ENCODE measurements at regions of chr2 and their contacts with region 1.

Region 1: GRCh38 chr2:205680067-205680466 is 2.2 kb upstream of the NRP2 start:
- DNase-seq: peak in 4 of 10 donors; percentile 33 to 77 (median 40)

Region 2: DNA sequence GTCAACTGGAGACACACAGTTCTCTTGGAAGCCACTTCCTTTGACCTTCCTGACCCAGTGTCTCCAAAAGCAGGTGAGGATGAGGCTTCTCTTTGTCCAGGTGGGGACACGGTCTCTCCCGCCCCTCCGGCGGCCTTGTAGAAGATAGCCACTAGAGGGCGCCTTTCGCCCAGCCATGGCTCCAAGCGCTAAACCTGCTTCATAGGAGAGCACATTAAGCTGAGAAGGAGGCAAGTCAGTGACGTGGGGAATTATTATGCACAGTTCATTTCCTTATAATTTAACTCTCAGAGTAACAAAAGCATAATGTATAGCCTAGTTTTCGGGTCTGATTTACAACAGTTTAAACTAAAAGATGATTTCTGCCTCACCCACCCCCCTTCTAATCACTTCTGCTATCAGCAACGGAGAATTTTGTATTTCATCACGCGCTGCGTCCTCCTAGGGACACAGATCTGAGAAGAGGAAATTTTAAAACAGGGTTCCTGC is 1534.8 kb before region 1 on chr2:
- intact Hi-C with region 1: loop called (anchors 10 kb)
- DNase-seq: peak; percentile 43 to 96 (median 76)

Region 3: DNA sequence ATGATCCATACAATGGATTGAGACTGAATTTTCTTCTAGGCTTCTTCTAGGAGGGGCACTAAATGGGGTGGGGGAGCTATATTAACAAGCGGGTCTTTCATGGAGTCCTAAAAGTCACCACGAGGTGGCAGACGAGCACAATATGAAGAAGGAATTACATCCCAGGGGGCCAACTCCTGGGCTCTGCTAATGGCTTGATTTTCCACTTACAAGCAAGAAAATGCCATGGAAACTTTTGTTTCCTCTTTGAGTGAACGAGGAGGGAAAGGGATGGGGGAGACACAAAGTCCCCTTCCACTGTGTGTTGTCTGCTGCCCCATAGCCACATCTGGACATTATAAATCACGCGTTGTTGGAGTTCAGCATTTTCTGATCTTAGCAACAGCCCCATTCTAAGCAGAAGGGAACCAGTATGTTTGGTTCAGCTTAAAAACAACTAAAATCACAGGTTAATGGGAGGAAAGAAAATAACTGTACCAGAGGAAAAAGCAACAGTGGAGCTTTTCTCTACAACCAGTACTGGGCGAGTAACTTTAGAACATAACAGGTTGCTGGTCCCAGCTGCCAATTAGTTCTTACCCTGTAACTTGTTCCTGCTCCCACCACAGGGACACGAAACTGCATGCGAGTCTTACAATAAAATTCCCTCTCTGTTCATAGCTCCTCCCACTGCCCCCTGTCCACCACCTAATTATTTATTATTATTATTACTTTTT is 1419.7 kb before region 1 on chr2:
- intact Hi-C with region 1: loop called (anchors 2 kb)
- DNase-seq: peak in 7 of 10 donors; percentile 22 to 88 (median 68)

Region 4: DNA sequence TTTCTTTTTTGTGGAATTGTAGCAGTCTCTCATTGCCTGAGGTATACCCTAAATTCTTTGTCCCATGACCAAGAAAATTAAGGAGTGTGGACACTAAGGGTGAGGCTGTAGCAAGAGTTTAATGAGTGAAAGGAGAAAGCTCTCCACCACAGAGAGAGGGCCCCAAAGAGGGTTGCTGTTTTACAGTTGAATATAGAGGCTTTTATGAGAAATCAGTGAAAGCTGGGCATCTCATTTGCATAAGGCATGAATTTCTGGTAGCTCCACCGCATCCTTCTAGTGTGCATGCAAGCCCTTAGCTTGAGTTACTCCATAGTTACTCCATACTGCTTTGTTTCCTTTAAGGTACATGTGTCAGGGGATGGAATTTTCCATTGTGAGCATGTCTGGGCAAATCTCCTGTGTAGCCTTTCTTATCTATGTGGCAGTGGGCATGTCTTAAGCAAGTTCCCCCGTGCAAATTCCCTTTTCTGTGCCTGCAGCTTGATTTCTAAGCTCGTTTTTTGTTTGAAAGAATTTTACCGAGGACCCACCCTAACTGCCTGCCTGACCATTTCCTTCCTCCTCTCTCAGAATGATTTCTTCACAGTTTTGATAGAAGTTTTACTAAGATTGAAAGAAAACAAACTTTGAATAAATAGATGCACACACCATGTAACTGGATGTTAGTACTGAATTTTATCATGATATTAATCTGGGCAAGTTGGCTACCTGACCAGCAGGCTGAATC is 915.9 kb before region 1 on chr2:
- intact Hi-C with region 1: no loop called
- DNase-seq: no peak

Region 5: GRCh38 chr2:204871231-204871953 is 808.7 kb before region 1 on chr2:
- intact Hi-C with region 1: loop called (anchors 1 kb)
- DNase-seq: no peak

Region 6: DNA sequence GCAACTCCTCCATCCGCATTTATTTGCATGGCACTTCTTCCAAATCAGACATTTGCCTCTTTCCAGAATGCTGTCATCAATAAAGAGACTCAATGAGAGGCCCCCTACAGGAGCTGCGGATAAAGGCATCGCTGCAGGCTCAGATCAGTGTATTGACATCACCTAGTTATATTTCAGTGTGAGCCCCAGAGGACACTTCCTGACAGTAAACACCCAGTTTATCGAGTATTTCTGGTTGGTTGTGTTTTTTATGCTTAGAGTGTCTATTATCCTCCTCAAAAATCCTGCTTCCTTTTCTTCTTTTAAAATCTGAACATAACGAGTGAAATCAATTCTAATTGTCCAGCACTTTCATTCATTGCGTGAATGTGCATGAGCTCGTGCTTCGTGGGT is 41.0 kb after region 1 on chr2:
- intact Hi-C with region 1: loop called (anchors 5 kb)
- DNase-seq: no peak